Mammary epithelial cell (primary cell): ENCODE measurements at regions of chr16 and their contacts with region 1.

Region 1: DNA sequence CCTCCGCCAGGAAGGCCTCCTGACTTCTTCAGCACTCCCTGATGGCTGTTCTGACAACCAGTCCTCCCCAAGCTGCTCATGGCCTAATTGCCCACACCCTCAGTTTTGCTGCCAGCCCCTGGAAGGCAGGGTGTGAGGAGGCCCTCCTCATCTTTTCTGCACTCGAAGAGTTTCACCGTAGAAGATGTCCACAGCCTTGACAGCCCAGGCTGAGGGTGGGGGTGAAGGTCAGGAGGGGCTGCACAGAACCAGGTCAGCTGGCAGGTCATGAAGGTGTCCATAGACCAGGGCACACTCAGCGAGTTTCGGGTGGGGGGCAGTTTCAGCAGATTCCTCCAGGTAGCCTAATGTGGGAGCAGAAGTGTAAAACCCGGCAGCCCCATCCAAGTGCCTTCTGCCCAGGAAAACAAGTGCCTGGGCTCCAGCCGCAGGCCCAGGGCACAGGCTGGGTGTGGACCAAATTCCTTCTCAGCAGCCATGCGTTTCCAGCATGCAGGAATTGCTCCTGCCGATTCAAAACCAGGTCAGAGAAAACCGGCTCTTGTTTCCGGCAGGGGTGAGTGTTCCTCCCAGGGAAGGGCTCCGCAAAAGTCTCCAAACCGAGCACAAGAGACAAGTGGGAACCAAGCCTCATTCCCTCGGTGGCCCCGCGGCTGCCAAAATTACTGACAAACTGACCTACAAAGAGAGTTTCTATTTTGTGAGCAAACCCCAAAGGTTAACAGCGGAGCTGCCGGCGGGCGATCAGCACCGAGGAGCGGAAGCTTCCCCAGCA is 228.8 kb downstream of the C16orf78 start:
- DNase-seq: no peak
- H3K4me3 ChIP-seq: no peak overlapping the region
- H3K27ac ChIP-seq: no peak overlapping the region
- H3K4me1 ChIP-seq: no peaks in the 10 kb centered on the region
- H3K27me3 ChIP-seq: no peaks in the 10 kb centered on the region
- CTCF ChIP-seq: no peak

Region 2: GRCh38 chr16:49649013-49649785 is 46.8 kb after region 1 on chr16:
- CTCF ChIA-PET with region 1: no interaction called
- dilution Hi-C with region 1: loop called (anchors 5 kb)
- in situ Hi-C with region 1: no loop called
- intact Hi-C with region 1: no loop called
- DNase-seq: no peak
- H3K4me3 ChIP-seq: no peak overlapping the region
- H3K27ac ChIP-seq: no peak overlapping the region
- H3K4me1 ChIP-seq: no peaks in the 10 kb centered on the region
- H3K27me3 ChIP-seq: no peaks in the 10 kb centered on the region
- CTCF ChIP-seq: no peak

Region 3: DNA sequence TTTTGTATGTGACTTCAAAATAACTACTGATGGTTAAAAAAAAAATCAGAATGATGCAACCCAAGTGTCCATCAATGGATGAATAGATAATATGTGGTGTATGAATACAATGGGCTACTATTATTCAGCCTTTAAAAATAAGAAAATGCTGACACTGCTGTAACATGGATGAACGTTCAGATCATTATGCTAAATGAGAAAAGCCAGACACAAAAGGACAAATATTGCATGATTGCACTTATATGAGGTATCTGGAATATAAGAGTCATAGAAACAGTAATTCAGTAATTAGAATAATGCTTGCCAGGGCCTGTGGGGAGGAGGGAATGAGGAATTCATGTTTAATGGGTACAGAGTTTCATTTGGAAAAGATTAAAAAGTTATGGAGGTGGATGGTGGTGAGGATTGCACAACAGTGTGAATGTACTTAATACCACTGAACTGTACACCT is 576.1 kb after region 1 on chr16:
- CTCF ChIA-PET with region 1: no interaction called
- dilution Hi-C with region 1: no loop called
- in situ Hi-C with region 1: no loop called
- intact Hi-C with region 1: no loop called
- DNase-seq: no peak
- H3K4me3 ChIP-seq: no peak overlapping the region
- H3K27ac ChIP-seq: no peak overlapping the region
- H3K4me1 ChIP-seq: no peaks in the 10 kb centered on the region
- H3K27me3 ChIP-seq: no peaks in the 10 kb centered on the region
- CTCF ChIP-seq: no peak